IMR-90 (cell line): ENCODE measurements at regions of chr1 and their contacts with region 1.

Region 1: DNA sequence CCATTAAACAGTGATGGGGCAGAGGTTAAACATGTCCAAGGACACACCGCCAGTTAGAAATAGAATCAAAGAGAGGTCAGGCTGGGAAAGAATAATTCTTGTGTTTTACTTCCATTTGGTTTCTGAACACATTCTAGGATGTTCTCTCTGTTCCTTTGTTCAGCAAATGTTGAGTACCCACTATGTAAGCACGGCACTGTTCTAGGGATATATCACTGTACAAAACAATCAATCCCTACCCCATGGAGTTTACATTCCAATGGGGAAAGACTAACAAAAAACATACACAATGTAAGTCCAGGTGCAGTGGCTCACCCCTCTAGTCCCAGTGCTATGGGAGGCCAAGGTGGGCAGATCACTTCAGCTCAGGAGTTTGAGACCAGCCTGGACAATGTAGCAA is 6.2 kb downstream of the MYOCOS start:
- DNase-seq: no peak
- ATAC-seq: no peak
- H3K4me3 ChIP-seq: no peak overlapping the region
- H3K27ac ChIP-seq: no peak overlapping the region
- H3K4me1 ChIP-seq: no peaks in the 10 kb centered on the region
- H3K27me3 ChIP-seq: peaks cover 3% of the 10 kb centered on the region; the same call in 1 of the 2 replicates
- CTCF ChIP-seq: no peak
- POLR2A ChIP-seq: no peak
- RAD21 ChIP-seq: no peak

Region 2: DNA sequence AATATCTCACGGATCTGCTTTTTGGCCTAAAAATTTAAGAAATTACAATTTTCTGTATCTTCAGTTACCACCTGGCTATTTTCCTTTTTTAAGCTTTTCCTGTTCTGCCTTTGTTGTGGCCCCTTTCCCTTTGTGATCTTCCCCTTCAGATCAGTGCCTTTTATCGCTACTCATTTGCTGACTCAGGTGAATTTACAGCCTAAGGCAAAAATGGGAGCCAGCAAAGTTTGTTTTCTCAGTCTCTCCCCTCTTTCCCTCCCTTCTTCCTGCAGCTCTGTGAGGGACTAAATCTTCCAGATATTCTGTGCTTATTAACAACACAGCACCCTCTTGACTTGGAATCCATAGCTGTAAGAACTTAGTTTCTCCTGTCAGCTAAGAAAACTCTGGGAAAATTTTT is 148.2 kb before region 1 on chr1:
- CTCF ChIA-PET with region 1: no interaction called
- POLR2A ChIA-PET with region 1: no interaction called
- dilution Hi-C with region 1: no loop called
- in situ Hi-C with region 1: no loop called
- intact Hi-C with region 1: no loop called
- DNase-seq: no peak
- ATAC-seq: no peak
- H3K4me3 ChIP-seq: no peak overlapping the region
- H3K27ac ChIP-seq: no peak overlapping the region
- H3K4me1 ChIP-seq: no peaks in the 10 kb centered on the region
- H3K27me3 ChIP-seq: no peaks in the 10 kb centered on the region
- CTCF ChIP-seq: no peak
- POLR2A ChIP-seq: no peak
- RAD21 ChIP-seq: no peak

Region 3: DNA sequence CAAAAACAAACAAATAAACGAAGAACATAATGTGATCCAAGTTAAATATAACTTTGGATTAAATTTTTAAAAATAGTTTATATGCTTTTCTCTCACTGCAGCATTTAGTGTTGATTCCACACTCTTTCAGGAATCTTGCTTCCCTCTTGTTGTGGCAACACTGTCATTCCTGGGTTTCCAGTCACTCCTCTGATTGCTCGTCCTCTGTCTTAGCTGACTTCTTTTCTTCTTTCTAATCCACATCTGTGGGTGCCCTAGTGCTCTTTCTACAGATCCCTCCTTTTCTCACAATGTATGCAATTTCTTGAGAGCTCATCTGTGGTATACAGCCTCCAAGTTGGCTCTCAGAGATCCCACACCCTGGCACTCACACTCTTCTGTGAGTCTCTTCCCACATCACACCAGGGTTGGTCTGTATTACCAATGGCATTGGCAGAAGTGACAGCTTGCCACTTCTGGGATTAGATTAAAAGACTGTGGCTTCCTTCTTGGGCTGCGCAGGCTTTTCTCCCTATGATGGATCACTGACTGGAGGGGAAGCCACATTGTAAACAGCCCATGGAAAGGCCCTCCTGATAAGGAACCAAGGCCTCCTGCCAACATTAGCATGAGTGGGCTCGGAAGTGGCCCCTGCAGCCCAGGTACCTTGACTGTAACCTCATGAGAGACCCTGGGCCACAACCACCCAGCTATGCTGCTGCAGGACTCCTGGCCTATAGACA is 35.8 kb after region 1 on chr1:
- CTCF ChIA-PET with region 1: no interaction called
- POLR2A ChIA-PET with region 1: no interaction called
- dilution Hi-C with region 1: no loop called
- in situ Hi-C with region 1: no loop called
- intact Hi-C with region 1: loop called (anchors 1 kb)
- DNase-seq: no peak
- ATAC-seq: no peak
- H3K4me3 ChIP-seq: no peak overlapping the region
- H3K27ac ChIP-seq: no peak overlapping the region
- H3K4me1 ChIP-seq: no peaks in the 10 kb centered on the region
- H3K27me3 ChIP-seq: peaks cover 1% of the 10 kb centered on the region
- CTCF ChIP-seq: no peak
- POLR2A ChIP-seq: no peak
- RAD21 ChIP-seq: no peak